Stomach (tissue), 19 donors: ENCODE measurements at regions of chr19 and their contacts with region 1.

Region 1: GRCh38 chr19:48588670-48589399 is 17.7 kb upstream of the SPACA4 start:
- DNase-seq: peak; percentile 96
- H3K4me3 ChIP-seq: peak overlapping the region; percentile 30 to 47 (median 39)
- H3K27ac ChIP-seq: peak overlapping the region in 1 of 5 donors; percentile 34
- H3K4me1 ChIP-seq: peaks cover 12 to 18% (median 17%) of the 10 kb centered on the region in 4 donors
- H3K27me3 ChIP-seq: no peaks in the 10 kb centered on the region
- CTCF ChIP-seq: peak in 6 of 7 experiments; percentile 81 to 98 (median 92)
- EP300 ChIP-seq: no peak
- POLR2A ChIP-seq: no peak

Region 2: DNA sequence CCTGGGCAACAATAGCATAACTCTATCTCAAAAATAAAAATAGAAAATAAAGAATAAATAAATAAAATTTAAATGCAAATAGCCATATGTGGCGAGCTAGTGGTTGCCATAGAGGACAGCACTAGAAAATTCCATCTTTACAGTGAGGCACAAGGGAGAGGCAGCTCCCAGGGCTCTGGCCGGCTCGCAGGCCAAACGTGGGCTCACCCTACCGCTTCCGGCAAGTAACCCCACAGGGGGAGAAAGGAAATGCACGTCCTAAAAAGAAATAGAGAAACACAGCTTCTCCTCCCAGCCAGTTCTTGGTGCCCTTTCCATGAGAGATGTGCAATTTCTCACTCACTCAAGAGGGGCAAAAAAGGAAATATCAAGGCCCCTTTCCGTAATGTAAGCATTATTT is 155.5 kb before region 1 on chr19:
- intact Hi-C with region 1: no loop called
- DNase-seq: no peak
- H3K4me3 ChIP-seq: no peak overlapping the region
- H3K27ac ChIP-seq: no peak overlapping the region
- H3K4me1 ChIP-seq: no peaks in the 10 kb centered on the region
- H3K27me3 ChIP-seq: peaks cover 0 to 28% (median 0%) of the 10 kb centered on the region in 3 donors
- CTCF ChIP-seq: no peak
- EP300 ChIP-seq: no peak
- POLR2A ChIP-seq: no peak

Region 3: DNA sequence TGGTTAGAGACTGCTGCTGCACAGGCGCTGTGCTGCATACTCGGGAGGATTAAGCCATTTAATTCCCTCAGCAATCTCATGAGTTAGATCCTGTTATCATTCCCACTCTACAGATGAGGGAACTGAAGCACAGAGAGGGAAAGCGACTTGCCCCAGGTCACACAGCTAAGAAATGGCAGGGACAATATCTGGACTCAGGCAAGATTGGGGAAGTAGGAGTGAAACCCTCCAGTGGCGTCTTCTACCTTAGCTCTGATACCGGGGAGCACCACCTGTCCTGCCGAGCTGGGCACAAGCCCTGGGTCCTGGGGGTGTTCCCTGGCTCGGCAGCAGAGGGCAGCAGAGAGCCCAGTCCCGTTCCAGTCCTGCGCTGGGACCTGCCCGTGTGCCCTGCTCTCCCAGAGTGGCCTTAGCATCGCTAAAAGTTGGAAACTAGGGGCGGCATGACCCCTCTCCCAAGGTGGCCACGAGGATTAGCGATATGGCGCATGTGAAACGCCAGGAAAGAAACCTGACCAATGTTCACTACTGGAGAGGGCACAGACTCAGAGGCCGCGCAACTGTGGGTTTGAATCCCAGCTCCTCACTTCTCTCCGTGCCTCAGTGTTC is 99.1 kb before region 1 on chr19:
- intact Hi-C with region 1: loop called (anchors 5 kb)
- DNase-seq: peak; percentile 87 to 88
- H3K4me3 ChIP-seq: no peak overlapping the region
- H3K27ac ChIP-seq: no peak overlapping the region
- H3K4me1 ChIP-seq: peaks cover 30 to 79% (median 57%) of the 10 kb centered on the region in 4 donors
- H3K27me3 ChIP-seq: peaks cover 0 to 28% (median 4%) of the 10 kb centered on the region in 3 donors
- CTCF ChIP-seq: peak in 5 of 7 experiments; percentile 73 to 96 (median 93)
- EP300 ChIP-seq: no peak
- POLR2A ChIP-seq: no peak

Region 4: DNA sequence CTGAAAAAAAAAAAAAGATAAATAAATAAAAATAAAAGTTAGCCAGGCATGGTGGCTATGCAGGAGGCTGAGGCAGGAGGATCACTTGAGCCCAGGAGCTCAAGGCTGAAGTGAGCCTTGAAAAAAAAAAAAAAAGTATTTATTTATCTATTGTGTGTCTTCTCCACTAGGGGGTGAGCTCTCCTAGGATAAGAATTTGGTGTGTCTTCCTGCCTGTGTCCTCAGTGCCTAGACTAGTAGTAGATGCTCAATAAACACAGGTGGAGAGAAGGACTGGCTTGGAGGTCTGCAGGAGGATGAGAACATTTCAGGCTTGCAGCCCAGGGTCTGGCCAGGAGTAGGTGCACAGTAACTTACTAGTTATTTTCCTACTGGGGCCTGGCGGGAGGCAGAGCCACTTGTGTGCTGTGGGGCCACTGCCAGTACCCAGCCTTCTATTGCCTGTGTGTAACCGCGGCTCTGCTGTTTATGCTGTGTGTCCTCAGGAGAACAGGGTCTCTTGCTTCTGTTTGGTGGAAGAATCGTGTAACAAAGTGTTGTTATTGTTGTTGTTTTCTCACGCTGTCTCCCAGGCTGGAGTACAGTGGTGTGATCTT is 82.6 kb before region 1 on chr19:
- intact Hi-C with region 1: loop called (anchors 5 kb)
- DNase-seq: peak in 1 of 2 donors; percentile 28
- H3K4me3 ChIP-seq: no peak overlapping the region
- H3K27ac ChIP-seq: no peak overlapping the region
- H3K4me1 ChIP-seq: peaks cover 10 to 27% (median 16%) of the 10 kb centered on the region in 4 donors
- H3K27me3 ChIP-seq: peaks cover 2 to 37% (median 4%) of the 10 kb centered on the region in 3 donors
- CTCF ChIP-seq: peak in 4 of 7 experiments; percentile 39 to 47 (median 44)
- EP300 ChIP-seq: no peak
- POLR2A ChIP-seq: no peak